Activated CD4-positive, alpha-beta T cell treated with anti-CD3 and anti-CD28 coated beads for 36 hours (primary cell): ENCODE measurements at regions of chr7 and their contacts with region 1.

Region 1: GRCh38 chr7:43439631-43440401 is 143.1 kb upstream of the STK17A start:
- DNase-seq: peak; percentile 83
- ATAC-seq: peak; percentile 73
- H3K4me3 Mint-ChIP-seq: no peak overlapping the region
- H3K27ac Mint-ChIP-seq: no peak overlapping the region
- H3K4me1 Mint-ChIP-seq: peaks cover 4% of the 10 kb centered on the region
- H3K27me3 Mint-ChIP-seq: peaks cover 2% of the 10 kb centered on the region

Region 2: GRCh38 chr7:42338231-42338915 is 1101.4 kb before region 1 on chr7:
- CTCF ChIA-PET with region 1: no interaction called
- POLR2A ChIA-PET with region 1: no interaction called
- intact Hi-C with region 1: no loop called
- DNase-seq: no peak
- ATAC-seq: no peak
- H3K4me3 Mint-ChIP-seq: no peak overlapping the region
- H3K27ac Mint-ChIP-seq: no peak overlapping the region
- H3K4me1 Mint-ChIP-seq: no peaks in the 10 kb centered on the region
- H3K27me3 Mint-ChIP-seq: peaks cover under 1% of the 10 kb centered on the region

Region 3: GRCh38 chr7:43170571-43170970 is 269.2 kb before region 1 on chr7:
- CTCF ChIA-PET with region 1: interaction called, 3 read pairs
- POLR2A ChIA-PET with region 1: no interaction called
- intact Hi-C with region 1: loop called in 1 of 2 experiments (anchors 10 kb)
- DNase-seq: no peak
- ATAC-seq: no peak
- H3K4me3 Mint-ChIP-seq: no peak overlapping the region
- H3K27ac Mint-ChIP-seq: no peak overlapping the region
- H3K4me1 Mint-ChIP-seq: no peaks in the 10 kb centered on the region
- H3K27me3 Mint-ChIP-seq: peaks cover 21% of the 10 kb centered on the region

Region 4: DNA sequence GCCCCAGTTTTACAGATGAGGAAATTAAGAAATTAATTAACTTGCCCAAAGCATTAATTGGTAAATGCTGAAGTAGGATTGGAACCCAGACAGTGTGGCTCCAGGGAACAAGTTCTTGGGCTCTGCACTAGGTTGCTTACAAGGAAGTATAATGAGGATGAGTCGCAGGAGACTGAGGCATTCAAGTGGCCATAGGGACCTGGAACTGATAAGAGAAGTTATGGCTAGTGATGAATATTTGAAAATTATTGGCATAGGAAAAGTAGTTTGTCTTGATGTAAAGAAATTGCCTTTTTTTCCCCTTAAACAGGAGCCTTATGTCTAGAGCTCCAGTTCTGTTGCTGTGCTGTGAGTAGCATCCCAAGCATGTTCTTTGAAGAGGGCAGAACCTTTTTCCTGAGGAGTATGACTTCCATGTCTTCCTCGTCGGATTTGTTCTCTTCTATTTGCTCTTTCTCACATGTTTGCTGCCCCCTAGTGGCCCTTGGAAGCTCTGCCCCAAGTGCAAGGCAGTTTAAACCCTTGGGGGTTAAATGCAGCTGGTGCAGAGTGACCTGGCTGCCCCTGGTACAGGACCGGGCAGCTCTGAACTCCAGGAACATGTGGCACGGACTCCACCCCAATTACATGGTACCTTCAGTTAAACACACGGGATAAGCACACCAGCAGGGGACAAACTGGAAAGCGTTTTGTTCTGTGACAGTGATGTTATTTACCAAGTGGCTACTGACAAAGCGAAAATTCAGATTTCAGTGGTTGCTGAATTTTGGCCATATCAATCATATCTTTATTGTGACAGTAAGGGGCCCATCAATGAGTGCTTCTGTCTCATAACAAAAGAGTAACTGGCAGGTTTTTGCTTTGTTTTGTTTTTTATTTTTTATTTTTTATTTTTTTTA is 178.6 kb before region 1 on chr7:
- CTCF ChIA-PET with region 1: interaction called, 14 read pairs
- POLR2A ChIA-PET with region 1: no interaction called
- intact Hi-C with region 1: loop called in 1 of 2 experiments (anchors 2 kb)
- DNase-seq: peak; percentile 81
- ATAC-seq: peak; percentile 76
- H3K4me3 Mint-ChIP-seq: no peak overlapping the region
- H3K27ac Mint-ChIP-seq: no peak overlapping the region
- H3K4me1 Mint-ChIP-seq: no peaks in the 10 kb centered on the region
- H3K27me3 Mint-ChIP-seq: peaks cover 10% of the 10 kb centered on the region

Region 5: GRCh38 chr7:43372676-43373355 is 67.0 kb before region 1 on chr7:
- CTCF ChIA-PET with region 1: no interaction called
- POLR2A ChIA-PET with region 1: no interaction called
- intact Hi-C with region 1: no loop called
- DNase-seq: no peak
- ATAC-seq: no peak
- H3K4me3 Mint-ChIP-seq: no peak overlapping the region
- H3K27ac Mint-ChIP-seq: no peak overlapping the region
- H3K4me1 Mint-ChIP-seq: no peaks in the 10 kb centered on the region
- H3K27me3 Mint-ChIP-seq: peaks cover 17% of the 10 kb centered on the region

Region 6: GRCh38 chr7:43454936-43455518 is 15.2 kb after region 1 on chr7:
- CTCF ChIA-PET with region 1: interaction called, 16 read pairs
- POLR2A ChIA-PET with region 1: no interaction called
- intact Hi-C with region 1: no loop called
- DNase-seq: no peak
- ATAC-seq: no peak
- H3K4me3 Mint-ChIP-seq: no peak overlapping the region
- H3K27ac Mint-ChIP-seq: no peak overlapping the region
- H3K4me1 Mint-ChIP-seq: peaks cover 2% of the 10 kb centered on the region
- H3K27me3 Mint-ChIP-seq: peaks cover 8% of the 10 kb centered on the region

Region 7: DNA sequence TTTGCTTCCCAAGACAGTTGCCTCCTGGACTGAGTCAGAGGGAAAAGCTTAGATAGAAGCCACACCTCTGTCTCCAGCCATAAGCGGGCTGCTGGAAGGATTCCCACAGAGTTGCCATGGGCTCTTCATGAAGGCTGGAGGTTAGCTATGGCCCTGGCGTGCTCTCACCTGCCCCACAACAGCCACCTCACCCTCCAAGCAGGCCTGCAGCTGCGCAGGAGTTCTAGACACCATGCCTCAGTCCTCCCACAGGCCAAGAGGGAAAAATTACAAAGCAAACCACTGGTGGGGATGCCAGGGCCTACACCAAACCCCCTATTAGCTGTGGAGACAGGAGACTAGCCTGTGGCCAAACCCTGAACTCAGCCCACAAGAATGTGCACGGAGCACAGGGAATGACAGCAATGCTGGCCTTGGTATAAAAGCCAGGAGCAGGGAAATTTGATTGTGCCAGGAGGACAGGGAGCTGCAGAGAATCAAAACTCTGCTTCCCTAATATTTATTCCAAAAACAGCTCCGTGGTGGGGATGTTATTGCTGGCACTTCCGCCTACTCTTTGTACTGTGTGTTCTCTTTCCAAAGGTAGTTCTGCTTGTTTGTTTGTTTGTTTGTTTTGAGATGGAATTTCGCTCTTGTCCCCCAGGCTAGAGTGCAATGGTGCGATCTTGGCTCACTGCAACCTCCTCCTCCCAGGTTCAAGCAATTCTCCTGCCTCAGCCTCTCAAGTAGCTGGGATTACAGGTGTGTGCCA is 82.8 kb after region 1 on chr7:
- CTCF ChIA-PET with region 1: no interaction called
- POLR2A ChIA-PET with region 1: no interaction called
- intact Hi-C with region 1: no loop called
- DNase-seq: no peak
- ATAC-seq: no peak
- H3K4me3 Mint-ChIP-seq: no peak overlapping the region
- H3K27ac Mint-ChIP-seq: no peak overlapping the region
- H3K4me1 Mint-ChIP-seq: no peaks in the 10 kb centered on the region
- H3K27me3 Mint-ChIP-seq: no peaks in the 10 kb centered on the region